ENCODE measurements at regions of chr3 and their contacts with region 1.

Region 1: GRCh38 chr3:128680602-128681368 is 30.2 kb upstream of the RPN1 start:
- DNase-seq: peak; percentile 92
- ATAC-seq: peak; percentile 99
- H3K4me3 ChIP-seq: peak overlapping the region; percentile 47 to 60
- H3K27ac ChIP-seq: peak overlapping the region; percentile 96
- H3K4me1 ChIP-seq: peaks cover 13% of the 10 kb centered on the region
- H3K27me3 ChIP-seq: no peaks in the 10 kb centered on the region
- CTCF ChIP-seq: no peak

Region 2: GRCh38 chr3:128537121-128537703 is 143.6 kb before region 1 on chr3:
- CTCF ChIA-PET with region 1: no interaction called
- POLR2A ChIA-PET with region 1: no interaction called
- in situ Hi-C with region 1: no loop called
- intact Hi-C with region 1: no loop called
- DNase-seq: no peak
- ATAC-seq: no peak
- H3K4me3 ChIP-seq: no peak overlapping the region
- H3K27ac ChIP-seq: no peak overlapping the region
- H3K4me1 ChIP-seq: no peaks in the 10 kb centered on the region
- H3K27me3 ChIP-seq: peaks cover 29% of the 10 kb centered on the region
- CTCF ChIP-seq: no peak

Region 3: GRCh38 chr3:128753715-128754114 is 72.9 kb after region 1 on chr3:
- CTCF ChIA-PET with region 1: no interaction called
- POLR2A ChIA-PET with region 1: interaction called, 12 read pairs
- in situ Hi-C with region 1: no loop called
- intact Hi-C with region 1: no loop called
- DNase-seq: no peak
- ATAC-seq: no peak
- H3K4me3 ChIP-seq: no peak overlapping the region
- H3K27ac ChIP-seq: no peak overlapping the region
- H3K4me1 ChIP-seq: no peaks in the 10 kb centered on the region
- H3K27me3 ChIP-seq: no peaks in the 10 kb centered on the region
- CTCF ChIP-seq: no peak

Region 4: GRCh38 chr3:128794770-128795649 is 114.2 kb after region 1 on chr3:
- CTCF ChIA-PET with region 1: interaction called, 13 read pairs
- POLR2A ChIA-PET with region 1: interaction called, 3 read pairs
- in situ Hi-C with region 1: no loop called
- intact Hi-C with region 1: loop called (anchors 5 kb)
- DNase-seq: peak; percentile 54
- ATAC-seq: peak; percentile 97
- H3K4me3 ChIP-seq: no peak overlapping the region
- H3K27ac ChIP-seq: no peak overlapping the region; the same call in 1 of the 2 replicates
- H3K4me1 ChIP-seq: peaks cover 15% of the 10 kb centered on the region; the same call in 1 of the 2 replicates
- H3K27me3 ChIP-seq: no peaks in the 10 kb centered on the region
- CTCF ChIP-seq: peak; percentile 91

Region 5: DNA sequence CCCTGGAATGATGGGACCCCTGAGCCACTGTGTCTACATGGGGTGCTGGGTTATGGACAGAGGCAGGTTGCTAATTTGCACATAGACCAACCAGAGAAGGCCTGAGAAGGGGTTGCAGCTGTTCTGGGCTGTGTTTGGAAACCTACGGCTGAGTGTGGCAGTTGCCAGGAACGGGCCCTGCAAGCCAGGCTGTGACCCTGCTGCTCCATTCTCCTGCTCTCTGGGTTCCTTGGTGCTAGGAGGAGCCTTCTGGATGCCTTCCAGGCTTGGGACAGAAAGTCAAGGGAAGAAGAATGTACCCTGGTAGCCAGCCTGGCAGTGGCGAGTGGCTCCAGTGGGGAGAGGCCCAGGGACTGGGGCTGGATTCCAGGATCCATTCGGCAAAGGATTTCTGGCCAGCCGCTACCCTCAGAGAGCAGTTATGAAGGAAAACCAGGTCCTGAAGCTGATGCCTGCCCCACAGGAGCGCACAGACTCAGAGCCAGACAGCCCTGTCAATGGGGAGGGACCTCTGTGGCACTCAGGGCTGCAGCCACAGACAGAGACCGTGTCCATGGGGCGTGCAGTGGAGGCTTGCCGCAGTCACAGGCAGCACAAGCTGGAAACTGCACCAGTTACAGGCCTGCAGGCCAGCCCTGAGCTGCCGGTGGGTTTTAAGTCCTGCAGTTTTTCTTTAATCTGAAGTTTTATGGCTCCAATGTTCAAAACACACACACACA is 143.5 kb after region 1 on chr3:
- CTCF ChIA-PET with region 1: no interaction called
- POLR2A ChIA-PET with region 1: no interaction called
- in situ Hi-C with region 1: no loop called
- intact Hi-C with region 1: no loop called
- DNase-seq: no peak
- ATAC-seq: peak; percentile 51
- H3K4me3 ChIP-seq: no peak overlapping the region
- H3K27ac ChIP-seq: no peak overlapping the region
- H3K4me1 ChIP-seq: no peaks in the 10 kb centered on the region
- H3K27me3 ChIP-seq: no peaks in the 10 kb centered on the region
- CTCF ChIP-seq: no peak

Region 6: DNA sequence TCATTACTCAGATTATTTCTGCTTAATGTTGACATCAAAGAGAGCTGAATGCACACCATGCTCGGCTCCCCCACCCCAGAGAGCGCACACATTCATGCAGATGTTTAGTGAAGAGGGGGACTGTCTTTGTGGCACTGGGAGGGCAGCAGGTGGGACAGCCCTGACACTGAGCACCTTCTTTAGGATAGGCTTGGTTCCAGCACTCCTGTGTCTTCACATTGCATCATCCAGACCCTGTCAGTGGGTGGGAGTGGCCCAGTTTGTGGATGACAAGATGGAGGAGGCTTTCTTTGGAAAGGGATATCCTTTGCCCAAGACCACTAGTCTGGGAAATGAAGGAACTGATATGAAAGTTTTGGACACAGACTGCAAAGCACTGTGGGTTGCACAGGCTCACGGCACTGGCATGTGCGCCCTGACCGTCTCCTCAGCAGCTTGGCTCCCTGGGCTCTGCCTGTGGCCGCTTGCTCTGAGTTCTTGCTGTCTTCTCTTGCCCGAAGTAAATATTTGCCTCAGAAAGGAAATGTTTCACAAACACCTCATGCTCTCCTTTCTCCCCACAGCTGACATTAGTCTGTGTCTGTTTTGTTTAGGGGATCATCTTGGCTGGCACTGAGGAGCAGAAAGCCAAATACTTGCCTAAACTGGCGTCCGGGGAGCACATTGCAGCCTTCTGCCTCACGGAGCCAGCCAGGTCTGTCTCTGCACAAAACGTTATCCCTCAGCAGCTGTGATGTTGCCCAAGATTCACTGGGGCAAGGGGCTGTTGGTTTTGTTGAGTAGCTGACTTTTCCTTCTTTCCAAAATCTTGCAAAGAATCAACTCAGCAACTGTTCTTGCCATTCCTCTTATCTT is 215.3 kb after region 1 on chr3:
- CTCF ChIA-PET with region 1: no interaction called
- POLR2A ChIA-PET with region 1: no interaction called
- in situ Hi-C with region 1: no loop called
- intact Hi-C with region 1: no loop called
- DNase-seq: no peak
- ATAC-seq: no peak
- H3K4me3 ChIP-seq: no peak overlapping the region
- H3K27ac ChIP-seq: no peak overlapping the region
- H3K4me1 ChIP-seq: no peaks in the 10 kb centered on the region
- H3K27me3 ChIP-seq: no peaks in the 10 kb centered on the region
- CTCF ChIP-seq: no peak

Region 7: DNA sequence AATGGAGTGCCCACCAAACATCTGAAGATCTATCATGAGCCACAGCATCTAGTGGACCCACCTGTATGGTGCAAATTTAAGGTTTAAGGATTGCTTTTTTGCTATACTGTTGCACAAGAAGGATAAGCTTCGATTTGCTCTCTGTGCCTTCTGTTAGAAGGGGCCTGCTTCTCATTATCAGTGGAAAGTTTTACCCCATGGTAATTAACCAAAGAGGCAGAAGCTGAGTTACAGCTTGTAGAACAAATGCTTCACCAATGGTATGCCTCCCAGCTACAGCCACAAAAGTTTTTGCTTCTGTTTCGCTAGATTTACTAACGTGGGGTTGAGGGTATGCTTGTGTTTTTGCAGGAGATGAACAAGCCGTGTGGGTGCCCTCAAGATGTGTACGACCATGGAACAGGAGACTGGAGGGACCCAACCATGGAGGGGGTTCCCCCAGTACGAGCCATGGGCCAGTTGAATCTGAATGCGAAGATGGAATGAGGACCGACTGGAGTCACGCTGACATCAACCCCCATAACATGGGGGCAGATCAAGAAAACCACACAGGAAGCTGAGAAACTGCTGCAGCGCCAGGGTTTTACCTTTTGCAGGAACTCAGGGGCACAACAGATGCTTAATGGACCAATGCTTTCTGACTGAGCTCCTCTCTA is 242.1 kb after region 1 on chr3:
- CTCF ChIA-PET with region 1: no interaction called
- POLR2A ChIA-PET with region 1: no interaction called
- in situ Hi-C with region 1: no loop called
- intact Hi-C with region 1: loop called (anchors 5 kb)
- DNase-seq: no peak
- ATAC-seq: no peak
- H3K4me3 ChIP-seq: no peak overlapping the region
- H3K27ac ChIP-seq: no peak overlapping the region
- H3K4me1 ChIP-seq: no peaks in the 10 kb centered on the region
- H3K27me3 ChIP-seq: no peaks in the 10 kb centered on the region
- CTCF ChIP-seq: no peak